HEK293 (cell line): ENCODE measurements at regions of chr2 and their contacts with region 1.

Region 1: GRCh38 chr2:10079234-10079869 is 859 bp downstream of the CYS1 start:
- H3K4me3 ChIP-seq: peak overlapping the region; percentile 29
- H3K27ac ChIP-seq: peak overlapping the region; percentile 49; the same call in 1 of the 2 replicates
- H3K4me1 ChIP-seq: 0 out of 2 replicates have a peak, but pooled peaks cover 11% of the 10 kb centered on the region
- CTCF ChIP-seq: no peak

Region 2: GRCh38 chr2:10097352-10098148 is 18.2 kb after region 1 on chr2:
- CTCF ChIA-PET with region 1: interaction called, 124 read pairs
- POLR2A ChIA-PET with region 1: no interaction called
- H3K4me3 ChIP-seq: no peak overlapping the region
- H3K27ac ChIP-seq: no peak overlapping the region
- H3K4me1 ChIP-seq: peaks cover 2% of the 10 kb centered on the region; the same call in 1 of the 2 replicates
- CTCF ChIP-seq: peak; percentile 72